Heart left ventricle (tissue), 16 donors: ENCODE measurements at regions of chr12 and their contacts with region 1.

Region 1: GRCh38 chr12:109518820-109519665 is 41.6 kb downstream of the UBE3B start:
- DNase-seq: peak in 4 of 5 donors; percentile 60 to 71 (median 66)
- ATAC-seq: peak; percentile 27 to 69 (median 40)
- H3K4me3 ChIP-seq: no peak overlapping the region
- H3K27ac ChIP-seq: peak overlapping the region; percentile 35 to 89 (median 75)
- H3K4me1 ChIP-seq: peaks cover 14 to 57% (median 26%) of the 10 kb centered on the region in 12 donors
- H3K27me3 ChIP-seq: no peaks in the 10 kb centered on the region
- CTCF ChIP-seq: peak; percentile 74 to 95 (median 86)
- POLR2A ChIP-seq: no peak

Region 2: GRCh38 chr12:108989376-108989775 is 529.7 kb before region 1 on chr12:
- intact Hi-C with region 1: no loop called
- DNase-seq: no peak
- ATAC-seq: no peak
- H3K4me3 ChIP-seq: no peak overlapping the region
- H3K27ac ChIP-seq: no peak overlapping the region
- H3K4me1 ChIP-seq: no peaks in the 10 kb centered on the region
- H3K27me3 ChIP-seq: peaks cover 0 to 3% (median 0%) of the 10 kb centered on the region in 9 donors
- CTCF ChIP-seq: no peak
- POLR2A ChIP-seq: no peak

Region 3: GRCh38 chr12:109232731-109233130 is 286.3 kb before region 1 on chr12:
- intact Hi-C with region 1: no loop called
- DNase-seq: no peak
- ATAC-seq: peak in 1 of 4 donors; percentile 8
- H3K4me3 ChIP-seq: no peak overlapping the region
- H3K27ac ChIP-seq: no peak overlapping the region
- H3K4me1 ChIP-seq: no peaks in the 10 kb centered on the region
- H3K27me3 ChIP-seq: no peaks in the 10 kb centered on the region
- CTCF ChIP-seq: no peak
- POLR2A ChIP-seq: no peak

Region 4: GRCh38 chr12:109291521-109292341 is 227.3 kb before region 1 on chr12:
- intact Hi-C with region 1: no loop called
- DNase-seq: peak; percentile 57 to 87 (median 70)
- ATAC-seq: peak; percentile 86 to 96 (median 92)
- H3K4me3 ChIP-seq: peak overlapping the region in 9 of 12 donors; percentile 2 to 54 (median 38)
- H3K27ac ChIP-seq: peak overlapping the region in 6 of 12 donors; percentile 26 to 67 (median 54)
- H3K4me1 ChIP-seq: peaks cover 0 to 14% (median 5%) of the 10 kb centered on the region in 12 donors
- H3K27me3 ChIP-seq: peaks cover 0 to 12% (median 0%) of the 10 kb centered on the region in 9 donors
- CTCF ChIP-seq: no peak
- POLR2A ChIP-seq: no peak

Region 5: DNA sequence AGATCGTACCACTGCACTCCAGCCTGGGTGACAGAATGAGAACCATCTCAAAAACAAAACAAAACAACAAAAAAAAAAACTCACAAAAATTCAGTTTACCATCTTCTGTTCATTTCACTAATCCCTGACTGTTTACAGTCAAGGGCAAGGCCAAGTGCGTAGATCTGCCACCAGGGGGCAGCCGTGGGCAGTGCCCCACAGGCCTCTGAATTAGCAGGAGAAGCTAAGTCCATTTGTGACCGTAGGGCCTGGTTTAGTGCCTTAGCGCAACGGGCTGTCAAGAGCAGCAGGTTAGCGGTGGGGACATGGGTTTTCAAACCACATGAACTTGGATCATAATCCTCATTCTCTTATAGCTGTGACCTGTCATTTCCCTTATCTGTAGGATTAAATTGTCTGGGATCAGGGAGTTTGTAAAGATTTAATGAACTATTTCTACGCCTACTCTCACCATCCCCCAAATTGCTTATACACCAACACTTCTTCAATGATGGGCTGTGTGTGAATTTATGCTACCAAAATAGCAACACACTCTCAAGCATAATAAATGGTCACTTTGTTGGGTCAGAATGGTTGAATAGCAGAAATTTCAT is 90.9 kb before region 1 on chr12:
- intact Hi-C with region 1: loop called in 1 of 10 experiments (anchors 2 kb)
- DNase-seq: peak; percentile 75 to 90 (median 80)
- ATAC-seq: peak; percentile 73 to 92 (median 91)
- H3K4me3 ChIP-seq: no peak overlapping the region
- H3K27ac ChIP-seq: no peak overlapping the region
- H3K4me1 ChIP-seq: peaks cover 0 to 8% (median 6%) of the 10 kb centered on the region in 12 donors
- H3K27me3 ChIP-seq: peaks cover 0 to 4% (median 0%) of the 10 kb centered on the region in 9 donors
- CTCF ChIP-seq: peak; percentile 97 to 99 (median 99)
- POLR2A ChIP-seq: no peak

Region 6: GRCh38 chr12:109573029-109573913 is 54.2 kb after region 1 on chr12 and contains the starts of genes MMAB and MVK:
- intact Hi-C with region 1: loop called in 3 of 10 experiments (anchors 1 to 5 kb)
- DNase-seq: peak; percentile 99
- ATAC-seq: peak; percentile 98 to 99 (median 98)
- H3K4me3 ChIP-seq: peak within 1 kb of the TSS; percentile 60 to 93 (median 74)
- H3K27ac ChIP-seq: peak within 1 kb of the TSS; percentile 47 to 92 (median 82)
- H3K4me1 ChIP-seq: peaks cover 0 to 26% (median 18%) of the 10 kb centered on the region in 12 donors
- H3K27me3 ChIP-seq: no peaks in the 10 kb centered on the region
- CTCF ChIP-seq: no peak
- POLR2A ChIP-seq: peak in 1 of 2 donors; percentile 50
- total RNA-seq, gene MMAB: 29.5 to 43.3 (median 34.4) TPM
- total RNA-seq, gene MVK: 7.9 to 14.9 (median 10.1) TPM

Region 7: DNA sequence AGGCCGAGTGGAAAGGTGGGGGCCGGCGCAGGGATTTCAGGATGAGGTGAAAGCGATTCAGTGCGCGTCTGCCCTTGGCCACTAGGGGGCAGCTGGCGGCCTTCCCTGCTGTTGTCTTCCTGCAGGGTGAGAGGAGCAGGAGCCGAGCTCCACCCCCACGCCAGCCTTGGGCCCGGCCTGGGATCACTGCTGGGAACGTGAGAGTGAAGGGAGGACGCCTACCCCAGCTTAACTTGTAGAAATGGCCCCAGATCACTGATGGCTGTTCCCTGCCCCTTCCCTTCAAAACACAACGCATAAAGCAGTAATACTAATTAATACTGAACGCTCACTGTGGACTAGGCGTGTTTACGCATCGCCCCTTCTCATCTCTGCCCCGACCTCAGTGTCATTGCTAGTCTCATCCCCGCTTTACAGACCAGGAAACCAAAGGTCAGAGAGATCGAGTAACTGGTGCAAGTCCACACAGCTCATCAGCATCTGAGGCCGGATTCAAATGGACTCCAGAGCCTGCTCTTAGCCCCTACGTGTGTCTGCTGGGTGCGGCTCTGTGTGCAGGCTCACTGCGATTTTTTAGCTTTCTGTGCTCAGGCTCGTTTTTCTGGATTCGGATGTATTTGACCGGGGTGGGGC is 78.9 kb after region 1 on chr12:
- intact Hi-C with region 1: loop called in 8 of 10 experiments (anchors 2 to 5 kb)
- DNase-seq: peak; percentile 86 to 93 (median 90)
- ATAC-seq: peak; percentile 84 to 90 (median 88)
- H3K4me3 ChIP-seq: no peak overlapping the region
- H3K27ac ChIP-seq: no peak overlapping the region
- H3K4me1 ChIP-seq: peaks cover 0 to 18% (median 6%) of the 10 kb centered on the region in 12 donors
- H3K27me3 ChIP-seq: peaks cover 0 to 2% (median 0%) of the 10 kb centered on the region in 9 donors
- CTCF ChIP-seq: peak; percentile 92 to 98 (median 96)
- POLR2A ChIP-seq: no peak

Region 8: DNA sequence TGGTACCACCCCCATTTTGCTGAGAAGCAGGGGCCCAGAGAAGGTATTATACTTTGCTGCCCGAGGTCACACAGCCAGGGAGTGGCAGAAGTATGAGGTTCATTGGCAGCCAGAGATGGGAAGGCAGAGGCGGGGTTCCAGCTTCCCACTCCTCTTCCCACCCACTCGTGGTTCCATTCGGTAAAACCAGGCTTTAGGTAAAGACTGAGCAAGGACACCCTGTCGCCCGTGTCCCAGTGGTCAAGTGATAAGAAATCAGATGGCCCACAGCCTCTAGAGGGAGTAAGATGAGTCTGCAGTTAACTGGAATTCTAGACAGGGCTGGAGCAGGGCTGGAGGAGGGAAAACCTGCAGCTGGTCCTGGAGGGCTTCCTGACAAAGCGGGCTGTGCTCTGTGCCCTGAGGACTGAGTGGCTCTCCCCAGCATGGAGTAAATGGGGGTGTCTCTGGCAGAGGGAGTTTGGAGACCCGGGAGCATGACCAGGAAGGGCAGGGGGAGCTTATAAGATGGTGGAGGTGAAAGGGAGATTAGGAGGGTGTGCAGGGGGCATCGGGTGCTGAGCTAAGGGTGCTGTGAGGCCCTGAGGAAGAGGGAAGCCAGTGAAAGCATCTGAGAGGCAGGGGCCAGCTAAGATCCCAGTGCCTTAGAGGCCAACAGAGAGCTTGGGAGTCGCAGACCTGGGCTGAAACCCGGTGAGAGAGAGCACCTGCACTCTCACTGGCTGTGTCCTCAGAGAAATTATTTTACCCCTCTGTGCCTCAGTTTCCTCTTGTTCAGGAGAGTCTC is 200.4 kb after region 1 on chr12:
- intact Hi-C with region 1: loop called in 4 of 10 experiments (anchors 5 to 10 kb)
- DNase-seq: no peak
- ATAC-seq: no peak
- H3K4me3 ChIP-seq: no peak overlapping the region
- H3K27ac ChIP-seq: peak overlapping the region in 11 of 12 donors; percentile 77 to 96 (median 86)
- H3K4me1 ChIP-seq: peaks cover 4 to 92% (median 41%) of the 10 kb centered on the region in 12 donors
- H3K27me3 ChIP-seq: peaks cover 0 to 22% (median 0%) of the 10 kb centered on the region in 9 donors
- CTCF ChIP-seq: peak in 1 of 12 donors; percentile 10
- POLR2A ChIP-seq: no peak

Region 9: GRCh38 chr12:109880016-109880931 is 361.2 kb after region 1 on chr12 and contains the start of gene GLTP:
- intact Hi-C with region 1: loop called in 1 of 10 experiments (anchors 1 kb)
- DNase-seq: peak; percentile 89 to 94 (median 89)
- ATAC-seq: peak; percentile 88 to 98 (median 96)
- H3K4me3 ChIP-seq: peak within 1 kb of the TSS; percentile 60 to 93 (median 80)
- H3K27ac ChIP-seq: peak within 1 kb of the TSS in 11 of 12 donors; percentile 54 to 87 (median 77)
- H3K4me1 ChIP-seq: peaks cover 0 to 35% (median 16%) of the 10 kb centered on the region in 12 donors
- H3K27me3 ChIP-seq: no peaks in the 10 kb centered on the region
- CTCF ChIP-seq: peak in 11 of 12 donors; percentile 13 to 88 (median 68)
- POLR2A ChIP-seq: peak in 1 of 2 donors; percentile 52
- total RNA-seq, gene GLTP: 18.0 to 68.6 (median 25.1) TPM